GM12878 (cell line): ENCODE measurements at regions of chrX and their contacts with region 1.

Region 1: GRCh38 chrX:78945186-78945912 is at the start of gene P2RY10:
- DNase-seq: peak; percentile 85
- ATAC-seq: peak; percentile 79
- H3K4me3 ChIP-seq: peak within 1 kb of the TSS; percentile 86
- H3K27ac ChIP-seq: peak within 1 kb of the TSS; percentile 84
- H3K4me1 ChIP-seq: peaks cover 10% of the 10 kb centered on the region
- H3K27me3 ChIP-seq: no peaks in the 10 kb centered on the region
- CTCF ChIP-seq: no peak
- EP300 ChIP-seq: peak; percentile 88 to 90
- POLR2A ChIP-seq: peak; percentile 67
- RAD21 ChIP-seq: no peak
- polyA plus RNA-seq, gene P2RY10: 43.8 to 71.9 TPM

Region 2: GRCh38 chrX:78103623-78104446 is 841.5 kb before region 1 on chrX and contains the start of gene PGK1:
- CTCF ChIA-PET with region 1: interaction called, 5 read pairs
- POLR2A ChIA-PET with region 1: no interaction called
- RAD21 ChIA-PET with region 1: no interaction called
- SMC1A ChIA-PET with region 1: no interaction called
- in situ Hi-C with region 1: no loop called
- intact Hi-C with region 1: loop called (anchors 2 kb)
- DNase-seq: peak; percentile 84
- ATAC-seq: peak; percentile 96
- H3K4me3 ChIP-seq: peak within 1 kb of the TSS; percentile 82
- H3K27ac ChIP-seq: peak within 1 kb of the TSS; percentile 86
- H3K4me1 ChIP-seq: peaks cover 3% of the 10 kb centered on the region; the same call in 1 of the 2 replicates
- H3K27me3 ChIP-seq: no peaks in the 10 kb centered on the region
- CTCF ChIP-seq: no peak
- EP300 ChIP-seq: 0 out of 4 replicates have a peak, but pooled peaks of 1 of the 2 experiments have one; percentile 19
- POLR2A ChIP-seq: peak; percentile 98
- RAD21 ChIP-seq: no peak
- polyA plus RNA-seq, gene PGK1: 633 to 835 TPM

Region 3: DNA sequence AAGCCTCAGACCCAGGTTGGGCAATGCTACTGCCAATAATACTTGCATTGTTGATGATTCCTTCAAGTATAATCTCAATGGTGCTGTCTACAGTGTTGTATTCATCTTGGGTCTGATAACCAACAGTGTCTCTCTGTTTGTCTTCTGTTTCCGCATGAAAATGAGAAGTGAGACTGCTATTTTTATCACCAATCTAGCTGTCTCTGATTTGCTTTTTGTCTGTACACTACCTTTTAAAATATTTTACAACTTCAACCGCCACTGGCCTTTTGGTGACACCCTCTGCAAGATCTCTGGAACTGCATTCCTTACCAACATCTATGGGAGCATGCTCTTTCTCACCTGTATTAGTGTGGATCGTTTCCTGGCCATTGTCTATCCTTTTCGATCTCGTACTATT is 190.4 kb before region 1 on chrX:
- CTCF ChIA-PET with region 1: no interaction called
- POLR2A ChIA-PET with region 1: no interaction called
- RAD21 ChIA-PET with region 1: no interaction called
- SMC1A ChIA-PET with region 1: interaction called, 3 read pairs
- in situ Hi-C with region 1: no loop called
- intact Hi-C with region 1: loop called (anchors 5 kb)
- DNase-seq: peak; percentile 49
- ATAC-seq: peak; percentile 94
- H3K4me3 ChIP-seq: no peak overlapping the region
- H3K27ac ChIP-seq: no peak overlapping the region
- H3K4me1 ChIP-seq: peaks cover 20% of the 10 kb centered on the region
- H3K27me3 ChIP-seq: no peaks in the 10 kb centered on the region
- CTCF ChIP-seq: peak; percentile 15 to 44 (median 32); a peak in 4 of 6 replicates
- EP300 ChIP-seq: no peak
- POLR2A ChIP-seq: no peak
- RAD21 ChIP-seq: peak; percentile 79

Region 4: GRCh38 chrX:78931814-78932213 is 13.5 kb before region 1 on chrX:
- CTCF ChIA-PET with region 1: interaction called, 3 read pairs
- POLR2A ChIA-PET with region 1: no interaction called
- RAD21 ChIA-PET with region 1: interaction called, 3 read pairs
- SMC1A ChIA-PET with region 1: interaction called, 12 read pairs
- in situ Hi-C with region 1: no loop called
- intact Hi-C with region 1: no loop called
- DNase-seq: no peak
- ATAC-seq: no peak
- H3K4me3 ChIP-seq: no peak overlapping the region
- H3K27ac ChIP-seq: no peak overlapping the region
- H3K4me1 ChIP-seq: no peaks in the 10 kb centered on the region
- H3K27me3 ChIP-seq: no peaks in the 10 kb centered on the region
- CTCF ChIP-seq: no peak
- EP300 ChIP-seq: no peak
- POLR2A ChIP-seq: no peak
- RAD21 ChIP-seq: no peak

Region 5: GRCh38 chrX:79107891-79108718 is 162.8 kb after region 1 on chrX:
- CTCF ChIA-PET with region 1: no interaction called
- POLR2A ChIA-PET with region 1: no interaction called
- RAD21 ChIA-PET with region 1: interaction called, 10 read pairs
- SMC1A ChIA-PET with region 1: interaction called, 6 read pairs
- in situ Hi-C with region 1: no loop called
- intact Hi-C with region 1: no loop called
- DNase-seq: peak; percentile 55
- ATAC-seq: peak; percentile 91
- H3K4me3 ChIP-seq: no peak overlapping the region
- H3K27ac ChIP-seq: peak overlapping the region; percentile 24
- H3K4me1 ChIP-seq: peaks cover 8% of the 10 kb centered on the region; the same call in 1 of the 2 replicates
- H3K27me3 ChIP-seq: no peaks in the 10 kb centered on the region
- CTCF ChIP-seq: no peak
- EP300 ChIP-seq: peak; percentile 58 to 80; a peak in 2 of 4 replicates
- POLR2A ChIP-seq: no peak
- RAD21 ChIP-seq: no peak

Region 6: DNA sequence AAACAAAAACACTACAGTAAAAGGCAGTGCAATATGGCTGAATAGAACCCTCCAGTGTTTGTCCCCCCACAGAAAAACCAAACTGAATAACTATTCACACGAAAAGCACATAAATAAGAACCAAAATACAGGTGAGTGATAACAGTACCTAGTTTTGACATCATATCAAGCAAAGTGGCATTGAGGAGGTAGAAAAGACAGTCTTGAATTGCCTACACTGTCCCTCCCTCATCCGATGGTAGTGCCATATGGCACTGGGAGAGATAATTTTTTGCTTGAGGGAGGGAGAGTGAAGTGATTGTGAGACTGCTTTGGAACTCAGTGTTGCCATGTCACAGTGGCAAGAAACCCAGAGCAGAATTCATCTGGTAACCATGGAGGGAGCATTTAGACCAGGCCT is 298.3 kb after region 1 on chrX:
- CTCF ChIA-PET with region 1: no interaction called
- POLR2A ChIA-PET with region 1: no interaction called
- RAD21 ChIA-PET with region 1: no interaction called
- SMC1A ChIA-PET with region 1: no interaction called
- in situ Hi-C with region 1: no loop called
- intact Hi-C with region 1: no loop called
- DNase-seq: no peak
- ATAC-seq: no peak
- H3K4me3 ChIP-seq: no peak overlapping the region
- H3K27ac ChIP-seq: no peak overlapping the region
- H3K4me1 ChIP-seq: no peaks in the 10 kb centered on the region
- H3K27me3 ChIP-seq: no peaks in the 10 kb centered on the region
- CTCF ChIP-seq: no peak
- EP300 ChIP-seq: no peak
- POLR2A ChIP-seq: no peak
- RAD21 ChIP-seq: no peak

Region 7: DNA sequence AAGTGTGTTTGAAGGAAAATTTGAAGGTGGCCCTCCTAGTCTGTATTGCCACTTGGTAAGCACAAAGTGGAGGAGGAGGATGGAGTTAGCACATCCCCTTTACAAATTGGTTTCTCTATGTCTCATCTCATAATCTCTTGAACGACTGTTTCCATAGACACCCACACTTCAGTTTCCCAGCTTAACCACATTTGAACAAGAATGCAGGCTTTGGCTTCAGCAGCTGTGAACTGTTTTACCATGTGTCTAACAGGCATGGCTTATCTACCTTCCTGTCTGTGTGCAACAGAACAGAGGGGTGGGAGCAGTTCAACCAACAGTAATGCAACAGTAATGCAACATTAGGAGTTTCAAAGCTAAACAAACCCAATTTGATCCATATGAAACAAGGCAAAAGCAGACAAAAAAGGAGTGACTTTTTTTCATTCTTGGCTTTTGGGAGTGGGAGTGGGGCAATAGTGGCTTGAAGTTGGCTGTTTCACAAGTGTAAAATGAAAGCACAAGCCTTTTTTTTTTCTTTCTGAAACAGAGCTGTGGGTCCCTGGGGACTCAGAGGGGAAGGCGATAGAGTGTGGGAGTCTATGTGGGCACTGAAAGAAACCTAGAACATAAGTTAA is 313.8 kb after region 1 on chrX:
- CTCF ChIA-PET with region 1: interaction called, 5 read pairs
- POLR2A ChIA-PET with region 1: interaction called, 8 read pairs
- RAD21 ChIA-PET with region 1: interaction called, 9 read pairs
- SMC1A ChIA-PET with region 1: interaction called, 6 read pairs
- in situ Hi-C with region 1: loop called (anchors 5 kb)
- intact Hi-C with region 1: loop called (anchors 2 kb)
- DNase-seq: peak; percentile 99
- ATAC-seq: peak; percentile 89
- H3K4me3 ChIP-seq: peak overlapping the region; percentile 30; the same call in 1 of the 2 replicates
- H3K27ac ChIP-seq: peak overlapping the region; percentile 87
- H3K4me1 ChIP-seq: peaks cover 21% of the 10 kb centered on the region; the same call in 1 of the 2 replicates
- H3K27me3 ChIP-seq: no peaks in the 10 kb centered on the region
- CTCF ChIP-seq: no peak
- EP300 ChIP-seq: peak; percentile 79 to 84; a peak in 3 of 4 replicates
- POLR2A ChIP-seq: no peak
- RAD21 ChIP-seq: peak; percentile 20; the same call in 1 of the 2 replicates